ENCODE measurements at regions of chr1 and their contacts with region 1.

Region 1: GRCh38 chr1:225871359-225872074 is 10.7 kb downstream of the TMEM63A start:
- DNase-seq: no peak
- H3K4me3 Mint-ChIP-seq: no peak overlapping the region
- H3K27ac Mint-ChIP-seq: no peak overlapping the region
- H3K4me1 Mint-ChIP-seq: peaks cover 58% of the 10 kb centered on the region
- H3K27me3 Mint-ChIP-seq: no peaks in the 10 kb centered on the region

Region 2: GRCh38 chr1:225816643-225817538 is 54.6 kb before region 1 on chr1:
- CTCF ChIA-PET with region 1: no interaction called
- POLR2A ChIA-PET with region 1: no interaction called
- DNase-seq: no peak
- H3K4me3 Mint-ChIP-seq: no peak overlapping the region
- H3K27ac Mint-ChIP-seq: no peak overlapping the region
- H3K4me1 Mint-ChIP-seq: peaks cover 6% of the 10 kb centered on the region
- H3K27me3 Mint-ChIP-seq: no peaks in the 10 kb centered on the region

Region 3: GRCh38 chr1:225881969-225882693 is 10.6 kb after region 1 on chr1 and contains the start of gene TMEM63A:
- CTCF ChIA-PET with region 1: interaction called, 35 read pairs
- POLR2A ChIA-PET with region 1: interaction called, 6 read pairs
- DNase-seq: peak; percentile 92
- H3K4me3 Mint-ChIP-seq: peak within 1 kb of the TSS; percentile 90
- H3K27ac Mint-ChIP-seq: peak within 1 kb of the TSS; percentile 91
- H3K4me1 Mint-ChIP-seq: peaks cover 49% of the 10 kb centered on the region
- H3K27me3 Mint-ChIP-seq: peaks cover 8% of the 10 kb centered on the region
- total RNA-seq, gene TMEM63A: 197 to 211 TPM

Region 4: DNA sequence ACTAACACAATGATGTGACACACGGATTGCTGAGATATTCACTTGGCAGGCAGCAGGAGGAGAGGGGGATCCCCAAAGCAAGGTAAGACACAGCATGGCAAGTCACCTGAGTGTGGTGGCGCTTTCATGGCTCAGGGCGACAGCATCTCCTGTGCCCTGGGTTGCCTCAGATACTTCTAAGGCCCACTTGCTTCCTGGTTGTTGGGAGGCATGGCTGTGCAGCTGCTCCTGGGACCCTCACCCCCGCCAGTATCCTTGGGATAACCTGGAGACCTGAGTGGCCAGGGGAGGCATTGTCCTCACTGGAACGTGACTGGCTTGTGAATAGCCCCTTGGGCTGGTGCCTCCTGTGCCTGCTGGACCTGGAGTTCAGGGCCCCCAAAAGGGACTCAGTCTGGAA is 746.9 kb after region 1 on chr1:
- CTCF ChIA-PET with region 1: no interaction called
- POLR2A ChIA-PET with region 1: no interaction called
- DNase-seq: no peak
- H3K4me3 Mint-ChIP-seq: no peak overlapping the region
- H3K27ac Mint-ChIP-seq: no peak overlapping the region
- H3K4me1 Mint-ChIP-seq: no peaks in the 10 kb centered on the region
- H3K27me3 Mint-ChIP-seq: peaks cover 5% of the 10 kb centered on the region